Activated CD4-positive, alpha-beta T cell treated with anti-CD3 and anti-CD28 coated beads for 36 hours (primary cell): ENCODE measurements at regions of chr7 and their contacts with region 1.

Region 1: GRCh38 chr7:148084138-148084537 is 506.4 kb upstream of the C7orf33 start:
- DNase-seq: peak; percentile 49
- ATAC-seq: no peak
- H3K4me3 Mint-ChIP-seq: no peak overlapping the region
- H3K27ac Mint-ChIP-seq: no peak overlapping the region
- H3K4me1 Mint-ChIP-seq: no peaks in the 10 kb centered on the region
- H3K27me3 Mint-ChIP-seq: peaks cover 12% of the 10 kb centered on the region

Region 2: DNA sequence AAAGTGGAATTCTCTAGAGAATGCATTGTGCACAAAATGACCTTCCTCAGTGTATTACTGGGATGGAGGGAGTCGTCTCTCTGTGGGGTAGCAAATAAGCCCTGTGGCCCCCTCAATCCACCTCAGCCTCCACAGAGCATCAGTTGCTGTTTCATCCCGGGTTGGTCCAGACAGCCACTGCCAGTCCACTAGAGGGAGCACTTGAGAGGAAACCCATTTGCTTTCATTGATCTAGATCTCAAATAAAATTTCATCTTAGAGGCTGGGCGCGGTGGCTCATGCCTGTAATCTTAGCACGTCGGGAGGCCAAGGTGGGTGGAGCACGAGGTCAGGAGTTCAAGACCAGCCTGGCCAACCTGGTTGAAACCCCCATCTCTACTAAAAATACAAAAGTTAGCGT is 838.8 kb before region 1 on chr7:
- CTCF ChIA-PET with region 1: no interaction called
- POLR2A ChIA-PET with region 1: no interaction called
- intact Hi-C with region 1: loop called in 1 of 2 experiments (anchors 1 kb)
- DNase-seq: peak; percentile 47
- ATAC-seq: peak; percentile 44
- H3K4me3 Mint-ChIP-seq: no peak overlapping the region
- H3K27ac Mint-ChIP-seq: no peak overlapping the region
- H3K4me1 Mint-ChIP-seq: no peaks in the 10 kb centered on the region
- H3K27me3 Mint-ChIP-seq: peaks cover 2% of the 10 kb centered on the region

Region 3: DNA sequence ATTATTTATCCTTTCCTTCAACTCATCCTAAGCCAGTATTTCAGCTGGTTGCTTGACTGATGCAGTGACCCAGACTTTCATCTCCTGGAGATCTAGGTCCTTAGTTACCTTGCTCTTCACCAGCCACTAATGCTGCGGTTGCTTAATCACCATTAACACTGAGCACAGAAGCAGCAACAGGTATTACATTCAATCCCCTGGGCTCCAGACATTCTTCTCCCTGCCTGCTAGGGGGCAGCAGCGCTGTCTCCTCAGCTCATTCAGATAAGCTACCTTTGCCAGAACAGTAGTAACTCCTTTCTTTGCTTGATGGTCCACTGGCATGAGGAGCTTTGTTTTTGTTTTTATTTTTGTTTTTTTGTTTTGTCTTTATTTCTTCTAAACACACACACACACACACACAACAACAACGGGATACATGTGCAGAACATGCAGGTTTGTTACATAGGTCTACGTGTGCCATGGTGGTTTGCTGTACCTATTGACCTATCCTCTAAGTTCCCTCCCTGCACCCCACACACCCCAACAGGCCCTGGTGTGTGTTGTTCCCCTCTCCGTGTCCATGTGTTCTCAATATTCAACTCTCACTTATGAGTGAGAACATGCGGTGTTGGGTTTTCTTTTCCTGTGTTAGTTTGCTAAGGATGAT is 536.8 kb before region 1 on chr7:
- CTCF ChIA-PET with region 1: no interaction called
- POLR2A ChIA-PET with region 1: no interaction called
- intact Hi-C with region 1: loop called in 1 of 2 experiments (anchors 1 kb)
- DNase-seq: peak; percentile 41
- ATAC-seq: no peak
- H3K4me3 Mint-ChIP-seq: no peak overlapping the region
- H3K27ac Mint-ChIP-seq: no peak overlapping the region
- H3K4me1 Mint-ChIP-seq: no peaks in the 10 kb centered on the region
- H3K27me3 Mint-ChIP-seq: no peaks in the 10 kb centered on the region

Region 4: GRCh38 chr7:147971606-147972110 is 112.5 kb before region 1 on chr7:
- CTCF ChIA-PET with region 1: no interaction called
- POLR2A ChIA-PET with region 1: no interaction called
- intact Hi-C with region 1: no loop called
- DNase-seq: no peak
- ATAC-seq: no peak
- H3K4me3 Mint-ChIP-seq: no peak overlapping the region
- H3K27ac Mint-ChIP-seq: no peak overlapping the region
- H3K4me1 Mint-ChIP-seq: no peaks in the 10 kb centered on the region
- H3K27me3 Mint-ChIP-seq: no peaks in the 10 kb centered on the region

Region 5: GRCh38 chr7:148049068-148049467 is 35.1 kb before region 1 on chr7:
- CTCF ChIA-PET with region 1: no interaction called
- POLR2A ChIA-PET with region 1: no interaction called
- intact Hi-C with region 1: no loop called
- DNase-seq: no peak
- ATAC-seq: no peak
- H3K4me3 Mint-ChIP-seq: no peak overlapping the region
- H3K27ac Mint-ChIP-seq: no peak overlapping the region
- H3K4me1 Mint-ChIP-seq: no peaks in the 10 kb centered on the region
- H3K27me3 Mint-ChIP-seq: no peaks in the 10 kb centered on the region